Naive thymus-derived CD4-positive, alpha-beta T cell (primary cell): ENCODE measurements at regions of chr6 and their contacts with region 1.

Region 1: DNA sequence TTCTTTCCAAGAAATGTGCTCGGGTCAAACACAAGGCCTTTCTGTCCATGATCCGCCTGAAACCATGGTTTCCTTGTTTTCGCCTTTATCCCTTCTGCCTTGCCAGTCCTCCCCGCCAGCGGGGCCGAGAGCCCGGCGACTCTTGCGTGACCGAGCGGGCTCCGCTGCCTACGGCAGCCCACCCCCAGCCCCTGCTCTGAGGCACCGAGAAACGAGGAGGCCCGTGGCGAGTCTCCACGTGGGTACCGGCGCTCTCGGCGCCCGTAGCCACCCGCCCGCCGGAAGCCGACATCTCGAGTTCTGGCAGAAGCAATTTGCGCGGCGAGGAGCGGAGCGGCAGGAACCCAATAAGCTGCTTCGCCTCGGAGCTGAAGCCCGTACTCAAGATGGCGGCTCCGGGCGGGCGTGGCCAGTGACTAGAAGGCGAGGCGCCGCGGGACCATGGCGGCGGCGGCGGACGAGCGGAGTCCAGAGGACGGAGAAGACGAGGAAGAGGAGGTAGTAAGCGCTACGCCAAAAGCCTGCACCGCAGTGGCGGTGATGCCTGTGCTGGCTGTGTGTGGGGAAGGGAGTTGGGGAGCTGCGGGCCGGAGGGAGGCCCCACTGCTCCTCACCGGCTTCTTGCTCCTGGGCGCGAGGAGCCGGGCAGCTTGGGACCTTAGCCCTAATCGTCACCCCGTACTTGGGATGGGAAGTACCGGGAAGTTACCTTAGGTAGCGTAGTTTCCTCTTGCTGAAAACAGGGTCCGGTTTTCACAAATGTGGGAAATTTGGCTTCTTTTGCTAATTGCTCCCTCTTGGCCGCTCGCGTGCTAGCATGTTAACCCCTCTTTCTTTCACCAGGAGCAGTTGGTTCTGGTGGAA is at the start of gene GTF3C6:
- DNase-seq: peak; percentile 85 to 94 (median 91)
- ATAC-seq: peak; percentile 99
- H3K4me3 ChIP-seq: peak within 1 kb of the TSS; percentile 86
- H3K4me3 Mint-ChIP-seq: peak within 1 kb of the TSS; percentile 95 to 99 (median 96)
- H3K27ac ChIP-seq: peak within 1 kb of the TSS; percentile 81
- H3K27ac Mint-ChIP-seq: peak within 1 kb of the TSS; percentile 96 to 99 (median 97)
- H3K4me1 ChIP-seq: peaks cover 4% of the 10 kb centered on the region in 2 donors
- H3K4me1 Mint-ChIP-seq: peaks cover 13 to 27% (median 20%) of the 10 kb centered on the region in 7 donors
- H3K27me3 ChIP-seq: no peaks in the 10 kb centered on the region
- H3K27me3 Mint-ChIP-seq: peaks cover 0 to 7% (median 0%) of the 10 kb centered on the region in 5 donors
- total RNA-seq, gene GTF3C6: 18.1 to 100 (median 29.9) TPM

Region 2: GRCh38 chr6:110944681-110945151 is 13.8 kb before region 1 on chr6:
- CTCF ChIA-PET with region 1: interaction called, 5 read pairs
- POLR2A ChIA-PET with region 1: no interaction called
- intact Hi-C with region 1: loop called in 1 of 2 experiments (anchors 1 kb)
- DNase-seq: peak in 1 of 9 donors; percentile 49
- ATAC-seq: peak; percentile 96
- H3K4me3 ChIP-seq: no peak overlapping the region
- H3K4me3 Mint-ChIP-seq: no peak overlapping the region
- H3K27ac ChIP-seq: no peak overlapping the region
- H3K27ac Mint-ChIP-seq: peak overlapping the region in 1 of 9 donors; percentile 77
- H3K4me1 ChIP-seq: no peaks in the 10 kb centered on the region
- H3K4me1 Mint-ChIP-seq: peaks cover 0 to 6% (median 0%) of the 10 kb centered on the region in 7 donors
- H3K27me3 ChIP-seq: no peaks in the 10 kb centered on the region
- H3K27me3 Mint-ChIP-seq: no peaks in the 10 kb centered on the region

Region 3: GRCh38 chr6:110971468-110971867 is 12.9 kb after region 1 on chr6:
- CTCF ChIA-PET with region 1: interaction called, 4 read pairs
- POLR2A ChIA-PET with region 1: interaction called, 12 read pairs
- intact Hi-C with region 1: no loop called
- DNase-seq: no peak
- ATAC-seq: no peak
- H3K4me3 ChIP-seq: no peak overlapping the region
- H3K4me3 Mint-ChIP-seq: no peak overlapping the region
- H3K27ac ChIP-seq: no peak overlapping the region
- H3K27ac Mint-ChIP-seq: no peak overlapping the region
- H3K4me1 ChIP-seq: no peaks in the 10 kb centered on the region
- H3K4me1 Mint-ChIP-seq: peaks cover 0 to 4% (median 0%) of the 10 kb centered on the region in 7 donors
- H3K27me3 ChIP-seq: no peaks in the 10 kb centered on the region
- H3K27me3 Mint-ChIP-seq: no peaks in the 10 kb centered on the region

Region 4: DNA sequence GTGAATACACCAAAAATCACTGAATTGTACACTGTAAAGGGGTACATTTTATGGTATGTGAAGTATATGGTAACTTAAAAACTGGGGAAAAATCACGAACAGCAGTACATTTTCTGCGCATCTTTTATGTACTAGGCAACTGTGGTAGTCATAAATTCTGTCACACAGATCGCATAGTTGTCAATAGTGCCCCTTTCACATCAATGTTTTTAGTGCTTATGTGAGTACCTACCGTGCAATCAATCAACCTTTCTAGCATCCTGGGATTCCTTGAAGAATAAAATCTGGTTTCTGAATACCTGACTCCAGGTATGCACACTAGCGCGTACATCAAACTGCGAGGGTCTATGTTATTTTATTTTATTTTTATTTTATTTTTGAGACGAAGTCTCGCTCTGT is 22.6 kb after region 1 on chr6:
- CTCF ChIA-PET with region 1: interaction called, 3 read pairs
- POLR2A ChIA-PET with region 1: interaction called, 61 read pairs
- intact Hi-C with region 1: loop called (anchors 1 kb)
- DNase-seq: peak in 1 of 9 donors; percentile 28
- ATAC-seq: no peak
- H3K4me3 ChIP-seq: peak overlapping the region; percentile 81
- H3K4me3 Mint-ChIP-seq: peak overlapping the region; percentile 95 to 99 (median 98)
- H3K27ac ChIP-seq: peak overlapping the region; percentile 92
- H3K27ac Mint-ChIP-seq: peak overlapping the region; percentile 96 to 100 (median 99)
- H3K4me1 ChIP-seq: peaks cover 0 to 11% of the 10 kb centered on the region in 2 donors
- H3K4me1 Mint-ChIP-seq: peaks cover 19 to 46% (median 35%) of the 10 kb centered on the region in 7 donors
- H3K27me3 ChIP-seq: no peaks in the 10 kb centered on the region
- H3K27me3 Mint-ChIP-seq: no peaks in the 10 kb centered on the region

Region 5: GRCh38 chr6:111605100-111605751 is 646.7 kb after region 1 on chr6:
- CTCF ChIA-PET with region 1: no interaction called
- POLR2A ChIA-PET with region 1: no interaction called
- intact Hi-C with region 1: loop called in 1 of 2 experiments (anchors 1 kb)
- DNase-seq: peak in 8 of 9 donors; percentile 12 to 60 (median 34)
- ATAC-seq: peak; percentile 56
- H3K4me3 ChIP-seq: peak overlapping the region; percentile 85
- H3K4me3 Mint-ChIP-seq: peak overlapping the region; percentile 89 to 97 (median 94)
- H3K27ac ChIP-seq: peak overlapping the region; percentile 84
- H3K27ac Mint-ChIP-seq: peak overlapping the region; percentile 90 to 98 (median 95)
- H3K4me1 ChIP-seq: peaks cover 13 to 15% of the 10 kb centered on the region in 2 donors
- H3K4me1 Mint-ChIP-seq: peaks cover 25 to 61% (median 58%) of the 10 kb centered on the region in 7 donors
- H3K27me3 ChIP-seq: no peaks in the 10 kb centered on the region
- H3K27me3 Mint-ChIP-seq: peaks cover 0 to 2% (median 0%) of the 10 kb centered on the region in 5 donors